ENCODE measurements at regions of chr18 and their contacts with region 1.

Region 1: GRCh38 chr18:9987931-9988330 is 74.1 kb downstream of the VAPA start:
- DNase-seq: no peak
- ATAC-seq: 0 out of 3 replicates have a peak, but pooled peaks have one; percentile 9
- H3K4me3 ChIP-seq: no peak overlapping the region
- H3K27ac ChIP-seq: no peak overlapping the region
- H3K4me1 ChIP-seq: peaks cover 6% of the 10 kb centered on the region in 2 experiments; a peak in 3 of 5 replicates
- H3K27me3 ChIP-seq: peaks cover 64 to 71% of the 10 kb centered on the region in 2 experiments
- CTCF ChIP-seq: no peak
- EP300 ChIP-seq: no peak
- POLR2A ChIP-seq: no peak
- RAD21 ChIP-seq: no peak

Region 2: DNA sequence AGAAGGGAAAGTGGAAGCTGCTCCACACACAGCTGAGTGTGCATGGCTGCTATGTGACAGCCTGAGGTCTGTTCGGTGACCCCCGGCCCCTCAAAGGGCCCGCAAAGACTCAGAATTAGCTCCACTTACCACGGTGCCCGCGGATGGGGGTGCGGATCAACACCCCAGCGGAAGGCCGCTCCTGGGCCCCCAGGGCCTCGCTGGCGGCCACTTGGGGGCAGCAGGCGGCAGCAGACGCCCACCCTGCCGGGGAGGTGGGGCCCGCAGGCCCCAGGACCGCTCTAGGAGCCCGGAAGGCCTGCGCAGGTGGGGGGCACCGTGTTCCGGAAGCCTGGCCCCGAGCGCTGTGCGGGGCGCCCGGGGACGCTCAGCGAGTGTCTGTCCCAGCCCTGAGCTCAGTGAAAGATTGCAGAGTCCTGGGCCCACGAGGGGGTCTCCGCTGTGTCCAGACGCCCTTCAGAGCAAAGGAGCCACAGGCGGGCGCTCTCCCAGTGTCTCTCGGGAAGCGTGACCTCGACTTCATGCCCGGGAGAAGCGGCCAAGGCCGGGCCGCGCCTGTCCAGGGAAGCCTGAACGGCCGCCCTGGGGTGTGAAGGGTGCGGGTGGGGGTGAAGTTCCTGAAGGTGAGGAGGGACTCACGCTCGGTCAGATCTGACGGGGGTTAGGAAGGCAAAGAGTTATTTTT is 44.5 kb after region 1 on chr18:
- CTCF ChIA-PET with region 1: no interaction called
- POLR2A ChIA-PET with region 1: no interaction called
- in situ Hi-C with region 1: no loop called
- intact Hi-C with region 1: no loop called
- DNase-seq: no peak
- ATAC-seq: peak; percentile 63
- H3K4me3 ChIP-seq: no peak overlapping the region
- H3K27ac ChIP-seq: no peak overlapping the region
- H3K4me1 ChIP-seq: peaks cover 0 to 11% of the 10 kb centered on the region in 2 experiments; a peak in 1 of 5 replicates
- H3K27me3 ChIP-seq: peaks cover 71 to 72% of the 10 kb centered on the region in 2 experiments
- CTCF ChIP-seq: peak in 1 of 3 experiments; percentile 30; a peak in 2 of 6 replicates
- EP300 ChIP-seq: no peak
- POLR2A ChIP-seq: no peak
- RAD21 ChIP-seq: peak in 1 of 2 experiments; percentile 23; a peak in 1 of 4 replicates

Region 3: DNA sequence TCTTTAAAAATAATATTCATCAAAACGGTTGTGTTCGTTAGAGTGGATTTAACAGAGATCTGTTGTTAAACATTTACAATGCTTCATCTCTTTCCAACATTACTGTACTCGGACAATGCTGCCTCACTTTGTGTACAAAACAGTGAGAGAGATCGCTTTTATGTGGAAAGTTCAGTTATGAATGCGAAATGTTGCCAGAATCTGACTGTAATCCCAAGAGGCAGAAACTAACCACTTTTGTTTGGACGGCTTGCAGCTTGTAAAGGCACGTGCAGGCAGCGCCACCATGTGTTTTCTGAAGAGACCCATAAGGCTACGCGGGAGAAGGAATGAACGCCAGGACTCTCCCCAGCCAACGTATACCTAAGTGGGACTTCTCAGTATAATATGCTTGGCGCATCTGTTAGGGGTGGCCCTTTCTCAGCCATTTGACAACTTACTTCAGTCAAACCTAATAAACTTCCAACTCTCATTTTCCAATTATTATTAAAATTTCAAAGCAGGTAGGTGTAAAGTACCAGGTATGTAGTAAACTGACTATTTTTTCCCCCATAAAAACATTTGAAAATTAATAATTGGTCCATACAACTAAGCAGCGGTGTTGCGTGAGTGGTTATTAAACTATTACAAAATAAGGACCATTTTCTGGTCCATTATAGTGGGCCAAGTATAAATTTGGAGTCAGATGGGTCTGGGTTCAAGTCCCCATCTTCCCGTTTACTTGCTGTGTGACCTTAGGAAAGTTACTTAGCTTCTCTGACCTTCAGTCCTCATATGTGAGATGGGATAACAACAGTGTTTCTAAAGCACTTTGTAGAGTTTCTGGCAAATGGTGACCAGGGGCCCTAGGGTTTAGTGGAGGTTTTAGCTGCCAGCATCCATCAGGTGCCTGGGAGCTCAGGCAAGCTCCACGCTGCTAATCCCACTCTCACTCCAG is 532.3 kb after region 1 on chr18:
- CTCF ChIA-PET with region 1: no interaction called
- POLR2A ChIA-PET with region 1: no interaction called
- in situ Hi-C with region 1: no loop called
- intact Hi-C with region 1: loop called (anchors 5 kb)
- DNase-seq: peak; percentile 72 to 89 (median 74)
- ATAC-seq: peak; percentile 97
- H3K4me3 ChIP-seq: no peak overlapping the region
- H3K27ac ChIP-seq: no peak overlapping the region
- H3K4me1 ChIP-seq: peaks cover 0 to 4% of the 10 kb centered on the region in 2 experiments; a peak in 1 of 5 replicates
- H3K27me3 ChIP-seq: peaks cover 13 to 33% of the 10 kb centered on the region in 2 experiments; a peak in 4 of 5 replicates
- CTCF ChIP-seq: peak; percentile 86 to 92 (median 90)
- EP300 ChIP-seq: no peak
- POLR2A ChIP-seq: no peak
- RAD21 ChIP-seq: peak; percentile 93 to 97

Measured in K562 (cell line).